GM10248 (cell line): ENCODE measurements at regions of chr11 and their contacts with region 1.

Region 1: DNA sequence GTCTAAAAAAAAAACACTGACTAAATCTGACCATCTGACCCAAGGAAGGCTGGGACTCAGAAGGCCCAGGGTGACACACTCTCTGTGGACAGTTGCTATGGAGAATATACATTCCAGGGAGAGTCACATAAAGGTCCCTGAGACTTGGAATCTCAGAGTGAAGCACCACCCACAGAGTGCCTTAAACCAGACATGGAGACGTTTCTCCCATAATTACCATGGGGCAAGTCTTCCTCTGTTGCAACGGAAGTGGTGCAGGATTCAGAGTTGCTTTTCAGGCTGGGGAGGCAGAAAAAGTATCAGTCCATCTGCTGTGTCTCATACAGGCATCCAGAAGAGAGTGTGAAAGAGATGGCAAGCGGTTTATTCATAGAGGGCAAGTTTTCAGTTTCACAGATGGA is 58.7 kb upstream of the SLN start:
- DNase-seq: no peak
- CTCF ChIP-seq: no peak

Region 2: GRCh38 chr11:107549253-107549953 is 221.1 kb before region 1 on chr11:
- CTCF ChIA-PET with region 1: interaction called, 10 read pairs
- POLR2A ChIA-PET with region 1: no interaction called
- DNase-seq: peak; percentile 35
- CTCF ChIP-seq: peak; percentile 85

Region 3: DNA sequence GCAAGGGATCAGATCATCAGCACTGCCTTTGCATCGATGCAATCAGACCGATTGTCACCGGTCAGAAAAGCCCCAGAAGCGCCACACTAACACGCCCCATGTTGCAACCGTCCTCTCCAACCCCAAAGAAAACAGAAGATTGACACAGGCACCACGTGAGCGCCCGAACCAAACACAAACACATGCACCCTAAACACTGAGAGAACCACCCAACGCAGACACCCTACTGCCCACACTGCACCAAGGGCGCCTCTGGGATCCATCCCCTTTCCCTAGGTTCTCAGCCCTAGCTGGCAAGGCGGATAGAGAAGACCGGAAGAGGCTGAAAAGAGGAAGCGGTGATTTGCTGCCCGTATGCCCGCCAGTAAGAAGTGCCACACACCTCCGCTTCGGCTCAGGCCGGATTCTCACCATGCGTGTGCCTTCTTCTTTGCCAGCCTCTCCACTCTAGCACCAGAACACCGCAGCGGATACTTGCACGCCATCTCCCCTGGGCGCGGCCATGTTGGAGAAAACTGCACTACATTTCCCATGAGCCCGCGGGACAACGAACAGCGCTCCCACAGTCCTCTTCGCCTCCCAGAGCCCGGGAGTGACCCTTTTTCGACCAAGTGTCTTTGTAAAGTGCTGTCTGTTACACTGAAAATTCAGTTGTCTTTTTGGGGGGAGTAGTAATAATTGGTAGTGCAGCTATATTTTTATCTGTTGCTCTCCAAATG is 205.2 kb before region 1 on chr11 and contains the start of gene ALKBH8:
- CTCF ChIA-PET with region 1: interaction called, 27 read pairs
- POLR2A ChIA-PET with region 1: no interaction called
- DNase-seq: peak; percentile 74
- CTCF ChIP-seq: no peak

Region 4: GRCh38 chr11:107598225-107599139 is 172.1 kb before region 1 on chr11:
- CTCF ChIA-PET with region 1: no interaction called
- POLR2A ChIA-PET with region 1: no interaction called
- DNase-seq: peak; percentile 26
- CTCF ChIP-seq: peak; percentile 33

Region 5: DNA sequence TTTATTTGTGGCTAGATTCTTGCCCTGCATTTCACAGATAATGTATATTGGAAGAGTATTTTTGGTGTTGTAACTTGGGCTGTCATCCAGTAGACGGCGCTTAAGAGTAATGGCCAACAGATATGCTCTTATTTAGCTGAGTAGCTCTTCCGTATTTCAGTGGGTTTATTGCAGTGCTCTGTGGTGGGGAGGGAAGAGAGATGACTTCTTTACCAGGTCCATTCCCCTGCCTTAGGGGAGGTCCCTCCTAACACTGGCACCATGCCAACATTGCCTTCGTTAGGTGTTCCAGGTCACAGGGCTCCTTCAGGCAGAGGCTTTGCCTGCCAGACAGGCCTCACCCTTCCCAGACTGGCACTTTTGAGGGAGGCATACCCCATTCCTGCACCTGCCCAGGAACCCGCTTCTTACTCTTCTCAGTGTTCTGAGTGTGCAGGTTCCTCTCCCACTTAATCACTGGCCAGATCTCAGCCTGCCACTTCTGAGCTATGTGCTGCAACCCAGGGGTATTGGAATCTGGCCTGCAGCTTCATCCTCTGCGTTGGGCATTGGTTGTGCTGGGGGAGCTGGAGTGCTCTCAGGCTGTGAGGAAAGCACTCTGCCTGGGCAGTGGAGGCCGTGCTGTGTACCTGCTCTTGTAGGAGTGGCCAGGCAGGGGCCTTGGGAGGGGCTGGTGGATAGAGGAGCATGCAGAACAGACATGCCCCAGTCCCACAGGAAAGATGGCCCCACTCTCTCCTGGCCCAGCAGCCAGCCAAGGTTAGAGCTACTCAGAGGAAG is 29.3 kb before region 1 on chr11:
- CTCF ChIA-PET with region 1: interaction called, 46 read pairs
- POLR2A ChIA-PET with region 1: no interaction called
- DNase-seq: peak; percentile 61
- CTCF ChIP-seq: peak; percentile 74

Region 6: DNA sequence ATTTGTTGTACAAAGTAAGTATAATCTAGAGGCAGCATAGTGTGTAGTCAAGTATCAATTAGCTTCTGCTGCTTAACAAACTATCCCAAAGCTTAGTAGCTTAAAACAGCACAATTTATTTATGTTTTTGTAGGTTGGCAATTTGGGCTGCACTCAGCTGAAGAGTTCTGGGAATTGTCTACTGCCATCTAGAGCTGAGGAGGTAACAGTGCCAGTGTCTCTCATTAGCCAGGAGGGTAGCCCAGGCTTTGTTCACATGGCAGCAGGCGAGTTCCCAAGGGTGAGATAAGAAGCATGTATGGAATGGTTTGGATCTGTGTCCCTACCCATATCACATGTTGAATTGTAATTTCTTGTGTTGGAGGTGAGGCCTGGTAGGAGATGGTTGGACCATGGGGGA is 12.9 kb before region 1 on chr11:
- CTCF ChIA-PET with region 1: interaction called, 41 read pairs
- POLR2A ChIA-PET with region 1: no interaction called
- DNase-seq: no peak
- CTCF ChIP-seq: no peak

Region 7: GRCh38 chr11:107857550-107858216 is 87.1 kb after region 1 on chr11:
- CTCF ChIA-PET with region 1: no interaction called
- POLR2A ChIA-PET with region 1: no interaction called
- DNase-seq: no peak
- CTCF ChIP-seq: no peak